Activated CD4-positive, alpha-beta memory T cell treated with anti-CD3 and anti-CD28 coated beads for 36 hours (primary cell): ENCODE measurements at regions of chr5 and their contacts with region 1.

Region 1: DNA sequence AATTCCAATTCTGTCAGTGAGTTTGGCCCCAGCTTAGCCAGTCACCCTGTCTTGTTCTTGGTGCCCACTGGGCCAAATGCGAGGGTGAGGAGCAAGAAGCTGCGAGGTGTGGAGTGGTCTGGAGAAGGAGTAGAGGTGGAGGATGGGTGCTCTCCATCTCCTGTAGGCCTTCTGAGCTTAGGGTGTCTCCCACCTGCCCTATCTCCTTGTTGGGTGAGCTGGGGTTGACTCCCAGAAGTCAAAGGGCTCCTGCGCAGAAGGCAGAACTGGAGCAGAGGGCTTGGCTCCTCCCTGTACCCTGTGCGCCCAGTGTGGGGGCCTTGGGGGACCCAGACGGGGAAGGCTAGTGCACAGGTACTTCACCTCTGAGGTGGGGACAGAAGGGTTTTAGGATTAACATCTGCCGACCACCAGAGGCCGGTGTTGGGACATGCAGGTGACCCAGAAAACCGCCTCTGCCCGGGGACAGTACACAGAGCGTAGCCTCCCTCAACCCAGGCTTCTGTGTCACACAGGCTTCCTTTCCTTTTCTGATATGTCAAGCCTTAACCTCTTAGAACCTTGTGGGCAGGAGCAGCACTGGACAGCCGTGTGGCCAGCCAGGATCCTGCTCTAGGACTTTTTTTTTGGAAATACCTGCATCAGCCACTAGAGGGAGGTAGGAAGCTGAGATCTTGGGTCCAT is 16.9 kb downstream of the IL5 start:
- DNase-seq: peak; percentile 48
- H3K4me3 Mint-ChIP-seq: no peak overlapping the region
- H3K27ac Mint-ChIP-seq: no peak overlapping the region
- H3K4me1 Mint-ChIP-seq: peaks cover 38% of the 10 kb centered on the region
- H3K27me3 Mint-ChIP-seq: peaks cover 2% of the 10 kb centered on the region

Region 2: DNA sequence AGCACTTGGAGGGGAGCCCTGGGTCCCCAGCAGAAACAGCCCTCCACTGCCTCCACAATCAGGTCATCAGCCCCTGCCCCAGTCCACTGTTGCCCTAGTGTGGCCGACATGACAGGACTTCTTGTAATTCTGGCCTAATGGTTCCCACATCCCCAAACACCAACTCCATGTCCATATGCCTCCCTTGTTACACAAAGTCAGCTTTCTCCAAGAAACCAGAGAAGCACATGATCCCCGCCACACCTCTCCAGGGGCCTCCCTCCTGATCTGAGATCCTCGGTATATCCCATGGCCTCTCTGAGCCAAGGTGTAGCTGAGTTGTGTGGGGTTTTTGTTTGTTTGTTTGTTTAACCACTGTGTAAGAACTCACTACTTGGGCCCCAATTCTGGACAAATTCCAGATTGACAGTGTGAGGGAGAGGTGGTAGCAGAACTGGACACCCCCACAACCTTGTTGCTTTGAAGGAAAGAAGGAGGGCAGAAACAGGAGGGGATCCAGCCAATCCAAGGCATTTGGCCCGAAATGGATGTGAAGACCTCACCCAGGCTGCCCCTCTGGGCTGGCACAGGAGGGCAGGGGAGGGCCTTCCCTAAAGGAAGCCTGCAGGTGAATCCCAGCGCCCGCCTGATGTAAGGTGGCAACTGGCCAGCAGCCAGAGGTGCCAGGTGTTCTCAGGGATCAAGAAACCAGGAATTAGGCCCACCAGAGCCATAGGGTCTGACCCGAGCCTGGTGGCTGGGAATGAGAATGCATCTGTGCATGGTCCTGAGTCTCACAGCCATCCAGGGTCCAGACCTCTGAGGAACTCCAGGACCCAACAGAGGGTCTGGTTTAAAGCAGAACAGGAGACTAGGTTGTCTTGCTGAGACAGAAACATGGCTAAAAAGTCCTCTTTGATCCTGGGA is 49.3 kb before region 1 on chr5:
- CTCF ChIA-PET with region 1: no interaction called
- POLR2A ChIA-PET with region 1: no interaction called
- intact Hi-C with region 1: no loop called
- DNase-seq: no peak
- H3K4me3 Mint-ChIP-seq: no peak overlapping the region
- H3K27ac Mint-ChIP-seq: peak overlapping the region; percentile 74
- H3K4me1 Mint-ChIP-seq: peaks cover 73% of the 10 kb centered on the region
- H3K27me3 Mint-ChIP-seq: no peaks in the 10 kb centered on the region

Region 3: DNA sequence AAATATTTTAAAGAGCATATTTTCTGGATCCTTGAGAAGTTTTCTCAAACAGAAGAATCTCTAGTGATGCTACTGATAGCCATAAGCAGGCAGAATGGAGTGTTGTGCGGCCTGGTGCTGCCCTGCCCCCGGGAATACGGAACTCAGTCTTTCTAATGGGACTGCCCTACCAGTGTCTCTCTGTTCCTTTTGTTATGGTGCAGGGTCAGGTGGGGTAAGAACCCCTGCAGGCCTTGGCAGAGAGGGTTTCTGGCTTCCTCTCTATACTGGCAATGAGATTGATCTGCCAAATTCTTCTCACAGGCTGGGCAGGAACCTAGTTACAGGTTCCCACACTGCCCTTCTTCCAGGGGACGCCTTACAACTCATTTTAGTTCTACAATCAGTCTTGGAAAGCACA is 14.3 kb after region 1 on chr5:
- CTCF ChIA-PET with region 1: interaction called, 25 read pairs
- POLR2A ChIA-PET with region 1: no interaction called
- intact Hi-C with region 1: no loop called
- DNase-seq: no peak
- H3K4me3 Mint-ChIP-seq: no peak overlapping the region
- H3K27ac Mint-ChIP-seq: no peak overlapping the region
- H3K4me1 Mint-ChIP-seq: peaks cover 11% of the 10 kb centered on the region
- H3K27me3 Mint-ChIP-seq: peaks cover 9% of the 10 kb centered on the region

Region 4: GRCh38 chr5:132546108-132546507 is 19.7 kb after region 1 on chr5:
- CTCF ChIA-PET with region 1: interaction called, 25 read pairs
- POLR2A ChIA-PET with region 1: no interaction called
- intact Hi-C with region 1: no loop called
- DNase-seq: peak; percentile 85
- H3K4me3 Mint-ChIP-seq: no peak overlapping the region
- H3K27ac Mint-ChIP-seq: no peak overlapping the region
- H3K4me1 Mint-ChIP-seq: peaks cover 25% of the 10 kb centered on the region
- H3K27me3 Mint-ChIP-seq: peaks cover 7% of the 10 kb centered on the region

Region 5: GRCh38 chr5:132576123-132576522 is 49.7 kb after region 1 on chr5:
- CTCF ChIA-PET with region 1: interaction called, 12 read pairs
- POLR2A ChIA-PET with region 1: no interaction called
- intact Hi-C with region 1: loop called (anchors 5 kb)
- DNase-seq: no peak
- H3K4me3 Mint-ChIP-seq: no peak overlapping the region
- H3K27ac Mint-ChIP-seq: peak overlapping the region; percentile 9
- H3K4me1 Mint-ChIP-seq: peaks cover 34% of the 10 kb centered on the region
- H3K27me3 Mint-ChIP-seq: no peaks in the 10 kb centered on the region

Region 6: DNA sequence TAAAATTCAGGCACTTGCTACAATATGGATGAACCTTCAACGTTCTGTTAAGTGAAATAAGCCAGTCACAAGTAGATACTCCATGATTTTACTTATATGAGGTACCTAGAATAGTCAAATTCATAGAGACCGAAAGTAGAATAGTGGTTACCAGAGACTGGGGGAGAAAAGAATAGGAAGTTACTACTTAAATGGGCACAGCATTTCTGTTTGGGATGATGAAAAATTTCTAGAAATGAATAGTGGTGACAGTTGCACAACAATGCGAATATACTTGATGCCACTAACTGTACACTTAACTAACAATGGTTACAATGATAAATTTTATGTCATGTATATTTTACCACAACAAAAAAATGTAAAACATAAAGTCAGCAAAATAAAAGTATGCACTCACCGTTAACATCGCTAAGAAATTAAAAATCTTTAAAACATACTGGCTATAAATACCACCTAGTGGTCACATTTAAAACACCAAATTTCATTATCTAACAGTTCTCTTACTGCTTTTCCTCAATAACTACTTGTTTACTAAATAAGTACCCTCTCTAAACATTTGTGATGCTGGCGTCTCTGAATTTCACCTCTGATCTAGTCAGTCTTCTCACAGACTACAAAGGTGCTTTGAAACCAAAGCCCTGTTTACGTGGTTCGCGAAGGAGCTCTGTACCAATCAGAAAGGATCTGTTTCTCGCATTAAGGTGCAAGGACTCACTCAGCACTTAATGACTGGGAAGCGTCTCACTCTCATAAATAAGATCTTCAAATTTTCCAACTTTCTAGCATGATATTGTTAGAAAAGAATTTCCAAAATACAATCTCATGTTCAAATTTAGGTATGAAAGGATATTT is 188.2 kb after region 1 on chr5:
- CTCF ChIA-PET with region 1: interaction called, 7 read pairs
- POLR2A ChIA-PET with region 1: no interaction called
- intact Hi-C with region 1: loop called (anchors 1 kb)
- DNase-seq: no peak
- H3K4me3 Mint-ChIP-seq: no peak overlapping the region
- H3K27ac Mint-ChIP-seq: no peak overlapping the region
- H3K4me1 Mint-ChIP-seq: peaks cover 14% of the 10 kb centered on the region
- H3K27me3 Mint-ChIP-seq: no peaks in the 10 kb centered on the region

Region 7: GRCh38 chr5:132797651-132798050 is 271.2 kb after region 1 on chr5:
- CTCF ChIA-PET with region 1: interaction called, 12 read pairs
- POLR2A ChIA-PET with region 1: no interaction called
- intact Hi-C with region 1: no loop called
- DNase-seq: no peak
- H3K4me3 Mint-ChIP-seq: no peak overlapping the region
- H3K27ac Mint-ChIP-seq: no peak overlapping the region
- H3K4me1 Mint-ChIP-seq: no peaks in the 10 kb centered on the region
- H3K27me3 Mint-ChIP-seq: peaks cover 19% of the 10 kb centered on the region